WTC11 (cell line): ENCODE measurements at regions of chr2 and their contacts with region 1.

Region 1: DNA sequence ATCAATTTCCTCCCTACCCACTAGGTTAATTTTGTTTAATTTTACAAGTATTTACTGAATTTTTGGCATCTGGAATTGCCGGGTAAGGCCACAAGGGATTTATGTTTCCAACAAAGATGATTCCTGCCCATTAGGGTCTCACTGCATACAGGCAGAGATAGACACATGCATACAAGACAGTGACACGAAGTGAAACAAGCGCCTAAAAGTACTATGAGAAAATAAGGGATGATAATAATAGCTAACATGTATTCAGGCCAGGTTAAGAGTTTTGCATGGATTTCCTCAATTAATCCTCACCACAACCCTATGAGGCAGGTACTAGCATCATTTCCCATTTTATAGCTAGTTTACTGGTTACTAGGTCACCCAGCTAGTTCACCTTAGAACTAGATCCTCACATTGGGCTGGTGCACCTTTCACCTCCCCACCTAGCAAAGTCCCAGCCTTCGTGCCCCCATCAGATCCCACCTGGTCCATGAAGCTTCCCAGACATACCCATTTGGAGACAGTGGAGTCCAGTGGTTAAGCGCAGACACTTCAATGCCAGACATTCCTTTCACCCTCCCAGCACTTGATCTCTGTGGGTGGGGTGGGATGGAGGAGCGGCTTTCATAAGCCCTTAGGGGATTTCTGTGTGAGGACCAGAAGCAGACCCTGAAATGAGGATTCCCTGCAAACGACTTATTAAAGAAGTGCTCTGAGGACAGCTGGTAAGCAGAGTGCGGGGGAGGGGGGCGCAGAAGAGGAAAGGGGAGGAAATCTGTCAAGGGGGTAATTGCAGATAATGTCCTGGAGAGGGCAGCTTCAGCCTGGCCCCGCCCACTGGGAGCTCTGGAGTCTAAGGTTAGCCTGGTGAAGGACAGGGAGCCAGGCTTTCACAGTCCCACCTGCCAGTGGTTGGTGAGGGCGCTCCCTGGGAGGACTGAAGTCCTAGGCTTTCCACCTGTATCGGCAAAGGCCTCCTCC is 5.8 kb upstream of the DGUOK start:
- DNase-seq: peak; percentile 85
- ATAC-seq: peak; percentile 99
- H3K4me3 Mint-ChIP-seq: peak overlapping the region; percentile 39
- H3K27ac Mint-ChIP-seq: no peak overlapping the region
- H3K4me1 Mint-ChIP-seq: peaks cover 7% of the 10 kb centered on the region
- H3K27me3 Mint-ChIP-seq: peaks cover 23% of the 10 kb centered on the region
- CTCF ChIP-seq: no peak

Region 2: DNA sequence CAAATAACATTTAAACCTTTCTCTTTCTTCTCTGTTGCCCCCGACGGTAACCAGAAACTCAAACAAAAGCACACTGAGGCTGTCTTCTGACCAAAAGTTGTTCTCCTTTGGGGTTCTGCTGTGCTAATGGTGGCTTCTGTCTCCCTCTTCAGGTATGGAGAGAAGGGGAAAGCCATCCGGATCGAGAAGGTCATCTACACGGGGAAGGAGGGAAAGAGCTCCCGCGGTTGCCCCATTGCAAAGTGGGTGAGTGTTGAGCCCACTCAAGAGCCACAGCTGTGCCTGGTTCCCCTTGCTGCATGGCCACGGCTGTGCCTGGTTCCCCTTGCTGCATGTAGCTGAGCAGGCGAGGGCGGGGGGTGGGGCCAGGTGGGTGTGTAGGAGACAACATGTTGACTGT is 159.5 kb after region 1 on chr2:
- CTCF ChIA-PET with region 1: interaction called, 12 read pairs
- POLR2A ChIA-PET with region 1: no interaction called
- DNase-seq: no peak
- ATAC-seq: peak; percentile 64
- H3K4me3 Mint-ChIP-seq: no peak overlapping the region
- H3K27ac Mint-ChIP-seq: peak overlapping the region; percentile 69; the same call in 1 of the 2 replicates
- H3K4me1 Mint-ChIP-seq: no peaks in the 10 kb centered on the region
- H3K27me3 Mint-ChIP-seq: no peaks in the 10 kb centered on the region
- CTCF ChIP-seq: no peak